ENCODE measurements at regions of chr12 and their contacts with region 1.

Region 1: DNA sequence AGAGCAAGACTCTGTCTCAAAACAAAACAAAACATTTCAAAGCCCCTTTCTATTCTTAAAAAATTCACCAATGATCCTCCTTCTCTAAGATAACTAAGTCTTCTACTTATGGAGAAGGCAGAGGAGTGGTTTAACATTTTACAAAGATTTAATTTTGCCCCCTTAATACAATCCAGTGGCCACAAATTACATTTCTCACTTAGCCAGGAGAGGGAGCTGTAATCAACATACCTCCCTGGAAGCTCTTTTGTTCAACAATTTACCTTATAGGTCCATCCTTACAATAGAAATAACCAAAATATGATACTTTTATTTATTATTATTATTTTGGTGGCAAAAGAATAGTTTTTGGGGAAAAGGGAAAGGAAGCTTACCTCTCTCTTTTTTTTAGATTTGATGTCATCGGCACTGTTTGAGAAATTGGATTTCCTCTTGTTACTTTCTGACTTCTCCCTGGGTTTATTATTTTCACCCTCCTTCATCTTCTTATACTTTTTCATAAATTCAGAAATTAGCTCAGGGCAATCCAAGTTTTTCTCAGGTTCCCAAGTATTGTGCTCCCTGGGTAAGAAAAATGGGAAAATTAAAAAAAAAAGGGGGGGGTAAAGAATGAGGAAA is 28.1 kb downstream of the CBX5 start:
- DNase-seq: peak in 3 of 9 experiments; percentile 11 to 71 (median 60)
- ATAC-seq: peak; percentile 79
- H3K4me3 ChIP-seq: no peak overlapping the region
- H3K4me3 Mint-ChIP-seq: no peak overlapping the region
- H3K27ac ChIP-seq: no peak overlapping the region
- H3K27ac Mint-ChIP-seq: no peak overlapping the region
- H3K4me1 ChIP-seq: no peaks in the 10 kb centered on the region
- H3K4me1 Mint-ChIP-seq: peaks cover 11% of the 10 kb centered on the region
- H3K27me3 ChIP-seq: no peaks in the 10 kb centered on the region
- H3K27me3 Mint-ChIP-seq: no peaks in the 10 kb centered on the region
- CTCF ChIP-seq: peak; percentile 87

Region 2: GRCh38 chr12:54240971-54241588 is 10.7 kb before region 1 on chr12:
- CTCF ChIA-PET with region 1: interaction called, 18 read pairs
- POLR2A ChIA-PET with region 1: interaction called, 3 read pairs
- intact Hi-C with region 1: no loop called
- DNase-seq: no peak
- ATAC-seq: no peak
- H3K4me3 ChIP-seq: no peak overlapping the region
- H3K4me3 Mint-ChIP-seq: no peak overlapping the region
- H3K27ac ChIP-seq: no peak overlapping the region
- H3K27ac Mint-ChIP-seq: no peak overlapping the region
- H3K4me1 ChIP-seq: no peaks in the 10 kb centered on the region
- H3K4me1 Mint-ChIP-seq: no peaks in the 10 kb centered on the region
- H3K27me3 ChIP-seq: no peaks in the 10 kb centered on the region
- H3K27me3 Mint-ChIP-seq: no peaks in the 10 kb centered on the region
- CTCF ChIP-seq: no peak

Region 3: GRCh38 chr12:54337280-54337842 is 85.6 kb after region 1 on chr12:
- CTCF ChIA-PET with region 1: interaction called, 26 read pairs
- POLR2A ChIA-PET with region 1: no interaction called
- intact Hi-C with region 1: no loop called
- DNase-seq: no peak
- ATAC-seq: no peak
- H3K4me3 ChIP-seq: no peak overlapping the region
- H3K4me3 Mint-ChIP-seq: no peak overlapping the region
- H3K27ac ChIP-seq: no peak overlapping the region
- H3K27ac Mint-ChIP-seq: no peak overlapping the region
- H3K4me1 ChIP-seq: no peaks in the 10 kb centered on the region
- H3K4me1 Mint-ChIP-seq: peaks cover 25% of the 10 kb centered on the region
- H3K27me3 ChIP-seq: no peaks in the 10 kb centered on the region
- H3K27me3 Mint-ChIP-seq: no peaks in the 10 kb centered on the region
- CTCF ChIP-seq: no peak